Activated naive CD4-positive, alpha-beta T cell treated with anti-CD3 and anti-CD28 coated beads for 36 hours (primary cell): ENCODE measurements at regions of chr7 and their contacts with region 1.

Region 1: GRCh38 chr7:129009437-129009836 is 45.5 kb downstream of the TNPO3 start:
- DNase-seq: no peak
- H3K4me3 Mint-ChIP-seq: no peak overlapping the region
- H3K27ac Mint-ChIP-seq: peak overlapping the region; percentile 84
- H3K4me1 Mint-ChIP-seq: peaks cover 35% of the 10 kb centered on the region
- H3K27me3 Mint-ChIP-seq: no peaks in the 10 kb centered on the region

Region 2: DNA sequence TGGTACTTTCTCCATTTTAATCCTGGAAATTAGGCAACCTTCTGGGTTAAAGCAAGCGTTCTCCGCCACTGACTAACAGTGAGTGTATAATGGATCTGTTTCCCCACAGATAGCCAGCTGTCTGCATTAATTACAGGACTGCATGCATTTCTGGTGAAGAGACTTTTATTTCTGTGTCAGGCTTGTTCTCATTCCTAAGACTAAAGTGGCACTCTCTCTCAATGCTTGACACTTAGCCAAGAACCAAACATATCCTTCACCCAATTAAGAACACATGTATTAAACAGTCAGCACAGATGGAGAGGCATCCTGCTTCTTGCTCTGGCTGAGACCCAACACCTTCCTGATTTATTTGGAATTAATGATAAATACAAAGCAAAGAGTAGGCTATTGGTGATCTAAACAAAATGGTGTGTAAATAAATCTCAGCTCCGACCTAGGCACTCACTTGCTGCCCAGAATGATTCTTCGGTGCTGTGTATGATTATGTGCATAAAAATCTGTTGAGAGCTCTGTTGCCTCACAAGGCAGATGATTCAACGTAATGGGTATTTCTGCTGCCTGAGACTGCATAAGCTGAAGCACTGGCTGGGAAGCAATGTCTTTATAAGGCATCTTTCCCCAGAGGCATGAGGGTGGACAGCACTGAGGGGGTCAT is 253.5 kb before region 1 on chr7:
- CTCF ChIA-PET with region 1: no interaction called
- intact Hi-C with region 1: no loop called
- DNase-seq: no peak
- H3K4me3 Mint-ChIP-seq: no peak overlapping the region
- H3K27ac Mint-ChIP-seq: no peak overlapping the region
- H3K4me1 Mint-ChIP-seq: peaks cover 4% of the 10 kb centered on the region
- H3K27me3 Mint-ChIP-seq: no peaks in the 10 kb centered on the region

Region 3: DNA sequence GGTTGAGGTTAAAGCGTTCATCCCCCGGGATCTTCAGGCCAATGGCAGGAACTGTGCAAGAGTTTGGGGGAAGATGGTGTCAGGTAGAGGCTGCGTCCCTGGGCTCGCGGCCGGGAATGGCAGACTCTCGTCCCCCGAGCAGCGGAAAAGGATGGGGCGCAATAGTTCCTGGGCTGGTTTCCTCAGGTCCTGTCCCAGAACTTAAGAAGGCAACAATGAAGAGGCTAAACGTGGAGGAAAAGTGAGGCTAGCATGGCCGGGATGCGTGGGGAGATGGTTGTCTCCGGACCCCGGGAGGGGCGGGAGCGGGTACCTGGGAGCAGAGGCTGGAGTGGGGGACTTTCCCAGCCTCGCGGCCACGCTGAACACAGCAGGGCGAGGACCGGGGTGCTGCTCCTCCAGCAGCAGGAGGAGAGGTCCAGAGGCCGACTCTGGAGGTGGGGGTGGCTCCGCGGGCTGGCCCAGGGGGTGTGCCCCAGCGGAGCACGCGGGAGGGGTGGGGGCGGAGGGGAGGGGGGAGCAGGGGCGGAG is 70.8 kb before region 1 on chr7:
- CTCF ChIA-PET with region 1: no interaction called
- intact Hi-C with region 1: loop called (anchors 1 kb)
- DNase-seq: no peak
- H3K4me3 Mint-ChIP-seq: peak overlapping the region; percentile 70
- H3K27ac Mint-ChIP-seq: no peak overlapping the region
- H3K4me1 Mint-ChIP-seq: peaks cover 35% of the 10 kb centered on the region
- H3K27me3 Mint-ChIP-seq: peaks cover 27% of the 10 kb centered on the region

Region 4: DNA sequence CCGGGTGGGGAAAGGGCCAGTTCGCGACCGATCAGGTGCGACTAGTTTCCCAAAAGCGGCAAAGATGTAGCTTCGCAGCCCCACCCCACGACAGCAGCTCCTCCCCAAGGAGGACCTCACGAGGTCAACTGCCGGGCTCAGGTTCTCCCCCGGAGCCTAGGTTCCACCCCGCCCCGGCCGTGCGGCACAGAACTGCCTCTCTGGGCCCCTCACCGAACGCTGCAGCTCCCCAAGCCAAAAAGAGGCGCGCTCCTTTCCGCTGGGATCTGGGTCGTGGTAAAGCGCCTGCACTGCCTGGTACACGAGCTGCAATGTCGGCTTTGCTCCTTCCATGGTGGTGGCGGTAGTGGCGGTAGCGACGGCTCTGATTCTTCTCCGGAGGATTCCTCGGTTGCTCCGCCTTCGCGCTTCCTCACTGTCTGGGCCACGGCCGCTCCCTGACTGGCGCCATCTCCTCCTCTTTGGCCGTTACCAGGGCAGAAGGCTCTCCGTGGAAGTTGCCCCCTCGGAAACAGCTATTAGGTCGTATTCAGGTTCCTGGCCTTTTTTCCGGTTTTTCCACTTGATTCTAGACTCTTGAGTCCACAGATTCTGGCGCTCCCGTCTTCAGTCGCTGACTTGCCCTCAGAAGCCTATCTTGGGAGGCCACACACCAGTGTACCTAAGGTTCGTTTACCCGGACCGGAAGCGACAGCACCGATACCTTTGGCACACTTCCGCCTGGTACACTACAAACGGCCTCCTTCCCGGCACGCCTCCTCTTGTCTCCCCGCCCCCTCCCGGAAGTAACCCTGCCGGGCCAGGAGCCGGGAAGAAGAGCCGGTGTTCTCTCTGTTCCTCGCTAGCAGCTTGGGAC is 45.2 kb after region 1 on chr7 and contains the start of gene TNPO3:
- CTCF ChIA-PET with region 1: no interaction called
- intact Hi-C with region 1: loop called (anchors 1 kb)
- DNase-seq: peak; percentile 95
- H3K4me3 Mint-ChIP-seq: peak within 1 kb of the TSS; percentile 95
- H3K27ac Mint-ChIP-seq: peak within 1 kb of the TSS; percentile 99
- H3K4me1 Mint-ChIP-seq: peaks cover 35% of the 10 kb centered on the region
- H3K27me3 Mint-ChIP-seq: peaks cover 3% of the 10 kb centered on the region
- total RNA-seq, gene TNPO3: 65.7 to 66.4 TPM